HepG2 (cell line): ENCODE measurements at regions of chr2 and their contacts with region 1.

Region 1: DNA sequence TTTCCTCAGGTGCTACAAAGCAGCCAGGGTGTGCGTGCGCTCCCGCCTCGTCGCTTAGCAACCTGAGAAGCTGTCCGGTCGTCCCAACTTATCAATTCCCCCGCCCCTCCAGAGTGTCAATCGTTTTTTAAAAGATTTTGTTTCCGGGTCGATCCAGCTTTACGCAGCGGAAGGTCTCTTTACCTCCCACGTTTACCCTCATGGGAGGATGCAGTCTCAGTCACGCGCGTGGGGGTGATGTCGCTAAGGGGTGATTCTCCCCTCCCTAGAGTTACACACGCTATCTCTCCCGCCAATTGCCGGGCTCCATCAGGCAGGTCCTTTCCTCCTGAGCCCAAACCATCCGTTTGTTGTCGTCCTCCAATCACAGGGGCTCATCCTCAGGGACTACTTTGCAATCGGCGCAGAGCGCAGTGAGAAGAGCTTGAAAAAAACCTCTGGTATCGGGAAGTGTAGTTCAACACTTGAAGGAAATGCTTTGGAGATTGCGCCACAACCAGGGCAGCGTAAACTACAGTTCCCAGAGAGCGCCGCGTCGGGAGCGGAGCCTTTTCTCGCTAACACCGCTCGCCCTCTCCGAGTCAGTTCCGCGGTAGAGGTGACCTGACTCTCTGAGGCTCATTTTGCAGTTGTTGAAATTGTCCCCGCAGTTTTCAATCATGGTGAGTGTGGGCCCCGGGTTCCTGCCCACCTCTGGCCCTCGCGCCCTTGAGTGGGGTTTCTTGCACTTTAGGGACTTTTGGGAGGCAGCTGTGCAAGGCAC is at the starts of genes MDH1 and WDPCP:
- DNase-seq: peak; percentile 100
- ATAC-seq: peak; percentile 94
- H3K4me3 ChIP-seq: peak within 1 kb of the TSS; percentile 89 to 94 (median 94)
- H3K27ac ChIP-seq: peak within 1 kb of the TSS; percentile 79
- H3K4me1 ChIP-seq: peaks cover 46% of the 10 kb centered on the region
- H3K27me3 ChIP-seq: no peaks in the 10 kb centered on the region; a peak in 1 of 5 replicates
- CTCF ChIP-seq: no peak
- EP300 ChIP-seq: peak; percentile 9 to 54; a peak in 1 of 4 replicates
- POLR2A ChIP-seq: peak; percentile 89 to 90
- RAD21 ChIP-seq: peak; percentile 45; the same call in 1 of the 2 replicates
- total RNA-seq, gene MDH1: 415 and 596 TPM in 2 replicates
- total RNA-seq, gene WDPCP: 4.6 and 5.2 TPM in 2 replicates

Region 2: DNA sequence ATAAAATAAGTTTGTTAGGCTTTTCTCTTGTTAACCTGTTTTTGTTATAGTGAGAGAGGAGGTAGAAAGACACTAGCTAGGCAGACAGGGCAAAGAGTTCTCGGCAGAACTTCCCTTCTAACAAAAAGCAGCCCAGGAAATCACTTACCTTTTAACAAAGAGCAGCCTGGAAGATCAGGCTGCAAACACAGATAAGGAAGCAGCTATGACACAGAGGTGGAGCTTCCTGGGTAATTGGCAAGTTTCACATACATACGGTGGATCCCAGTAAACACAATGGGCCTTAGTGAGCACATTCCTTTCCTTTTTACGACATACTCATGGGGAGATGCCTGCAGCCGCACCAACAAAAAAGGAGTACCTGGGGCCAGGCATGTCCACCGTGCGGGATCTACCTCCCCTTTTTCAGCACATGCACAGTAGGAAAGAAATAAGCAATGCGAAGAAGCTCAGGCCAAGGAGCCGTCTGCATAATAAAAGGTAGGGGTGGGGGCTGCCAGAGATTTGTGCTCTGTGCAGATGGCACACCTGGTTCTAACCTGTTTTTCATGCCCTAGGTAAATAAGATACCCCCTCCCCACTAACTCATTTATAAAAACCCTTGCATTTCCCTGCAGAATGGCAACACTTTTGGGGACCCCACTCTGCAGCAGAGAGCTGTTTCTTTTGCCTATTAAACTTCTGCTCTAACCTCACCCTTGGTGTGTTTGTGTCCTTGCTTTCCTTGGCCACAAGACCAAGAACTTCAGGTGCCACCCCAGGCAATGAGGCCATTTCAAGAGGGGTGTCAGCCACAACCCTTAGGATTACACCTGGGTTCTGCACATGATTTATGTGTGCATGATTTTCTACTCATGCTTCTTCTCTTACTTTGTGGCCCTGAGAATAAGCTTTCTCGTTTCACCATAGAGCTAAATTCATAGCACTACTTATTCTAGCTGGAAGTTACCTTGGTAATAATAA is 26.7 kb after region 1 on chr2:
- CTCF ChIA-PET with region 1: no interaction called
- POLR2A ChIA-PET with region 1: interaction called, 6 read pairs
- in situ Hi-C with region 1: no loop called
- intact Hi-C with region 1: loop called (anchors 1 kb)
- DNase-seq: peak; percentile 86
- ATAC-seq: peak; percentile 97
- H3K4me3 ChIP-seq: peak overlapping the region; percentile 2 to 53 (median 41)
- H3K27ac ChIP-seq: no peak overlapping the region
- H3K4me1 ChIP-seq: peaks cover 20% of the 10 kb centered on the region
- H3K27me3 ChIP-seq: peaks cover 1 to 4% of the 10 kb centered on the region in 2 experiments; a peak in 1 of 5 replicates
- CTCF ChIP-seq: no peak
- EP300 ChIP-seq: no peak
- POLR2A ChIP-seq: no peak
- RAD21 ChIP-seq: no peak

Region 3: DNA sequence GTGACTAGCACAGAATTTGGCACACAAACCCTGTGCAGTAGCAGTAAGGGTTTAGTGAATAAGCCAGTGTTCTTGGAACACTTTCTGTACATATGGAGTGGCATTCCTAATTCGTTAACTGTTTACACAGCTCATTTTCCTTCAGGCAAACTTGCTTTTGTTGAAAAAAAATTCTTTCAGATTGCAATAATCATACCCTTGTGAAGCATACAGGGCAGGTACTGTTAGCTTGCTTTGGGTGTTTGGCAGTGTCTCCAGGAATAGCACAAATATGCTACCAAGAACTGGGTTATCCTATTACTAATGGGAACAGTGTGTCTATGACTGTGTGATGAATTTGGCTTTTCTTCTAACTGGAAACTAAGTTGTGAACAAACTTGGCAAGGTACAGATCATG is 286.6 kb after region 1 on chr2:
- CTCF ChIA-PET with region 1: no interaction called
- POLR2A ChIA-PET with region 1: no interaction called
- in situ Hi-C with region 1: loop called (anchors 10 kb)
- intact Hi-C with region 1: no loop called
- DNase-seq: no peak
- ATAC-seq: no peak
- H3K4me3 ChIP-seq: no peak overlapping the region
- H3K27ac ChIP-seq: no peak overlapping the region
- H3K4me1 ChIP-seq: peaks cover 34% of the 10 kb centered on the region
- H3K27me3 ChIP-seq: no peaks in the 10 kb centered on the region
- CTCF ChIP-seq: no peak
- EP300 ChIP-seq: no peak
- POLR2A ChIP-seq: no peak
- RAD21 ChIP-seq: no peak